ENCODE measurements at regions of chr1 and their contacts with region 1.

Region 1: GRCh38 chr1:1890506-1891348 is at the start of gene GNB1:
- DNase-seq: peak; percentile 95
- ATAC-seq: peak; percentile 89
- total RNA-seq, gene GNB1: 182 TPM

Region 2: GRCh38 chr1:1777950-1778662 is 112.6 kb before region 1 on chr1 and contains the start of gene NADK:
- intact Hi-C with region 1: loop called (anchors 2 kb)
- DNase-seq: peak; percentile 87
- ATAC-seq: peak; percentile 62
- total RNA-seq, gene NADK: 26.9 TPM

Region 3: GRCh38 chr1:1832820-1833219 is 57.9 kb before region 1 on chr1:
- intact Hi-C with region 1: no loop called
- DNase-seq: no peak
- ATAC-seq: no peak

Region 4: GRCh38 chr1:1858382-1859086 is 32.2 kb before region 1 on chr1:
- intact Hi-C with region 1: loop called (anchors 2 kb)
- DNase-seq: peak; percentile 89
- ATAC-seq: peak; percentile 88

Measured in Right ventricle myocardium inferior (tissue), 1 donor.